ENCODE measurements at regions of chr13 and their contacts with region 1.

Region 1: DNA sequence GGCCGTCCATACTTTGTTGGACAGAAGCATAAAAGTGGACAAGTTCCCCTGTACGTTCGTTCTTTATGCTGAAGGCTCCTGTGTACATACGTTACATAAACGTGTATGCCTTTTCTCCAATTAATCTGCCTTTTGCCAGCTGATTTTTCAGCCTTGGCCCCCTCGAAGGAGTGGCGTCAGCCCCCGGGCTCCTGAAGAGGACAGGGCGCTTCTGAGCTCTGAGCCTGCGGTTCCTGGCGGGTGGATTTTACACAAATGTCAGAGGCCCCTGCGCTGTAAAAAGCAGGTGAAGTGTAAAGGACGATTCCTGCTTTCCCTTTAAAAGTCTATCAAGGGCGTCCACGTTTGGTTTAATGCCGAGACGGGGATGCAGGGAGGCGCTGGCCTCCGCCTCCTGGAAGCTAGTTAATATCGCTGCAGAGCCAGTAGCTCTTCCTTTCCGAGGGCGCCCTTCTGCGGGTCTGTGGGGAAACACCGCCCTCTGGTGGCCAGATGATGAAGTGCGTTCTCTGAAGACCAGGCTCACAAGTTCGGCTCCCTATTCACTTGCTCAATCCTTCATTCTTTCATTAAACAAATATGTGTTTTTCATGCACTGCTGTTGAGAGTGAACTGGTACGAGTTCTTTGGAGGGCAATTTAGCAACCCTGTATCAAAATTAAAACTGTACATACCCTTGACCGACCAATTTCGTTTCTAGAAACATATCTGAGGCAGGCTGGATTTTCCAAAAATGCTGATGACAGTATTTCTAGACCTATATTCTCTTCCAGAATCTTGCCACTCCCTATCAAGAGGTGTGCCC is 62.0 kb downstream of the GPR12 start:
- DNase-seq: peak; percentile 88
- ATAC-seq: peak; percentile 78
- H3K4me3 Mint-ChIP-seq: no peak overlapping the region
- H3K27ac Mint-ChIP-seq: no peak overlapping the region
- H3K4me1 Mint-ChIP-seq: no peaks in the 10 kb centered on the region
- H3K27me3 Mint-ChIP-seq: no peaks in the 10 kb centered on the region

Region 2: DNA sequence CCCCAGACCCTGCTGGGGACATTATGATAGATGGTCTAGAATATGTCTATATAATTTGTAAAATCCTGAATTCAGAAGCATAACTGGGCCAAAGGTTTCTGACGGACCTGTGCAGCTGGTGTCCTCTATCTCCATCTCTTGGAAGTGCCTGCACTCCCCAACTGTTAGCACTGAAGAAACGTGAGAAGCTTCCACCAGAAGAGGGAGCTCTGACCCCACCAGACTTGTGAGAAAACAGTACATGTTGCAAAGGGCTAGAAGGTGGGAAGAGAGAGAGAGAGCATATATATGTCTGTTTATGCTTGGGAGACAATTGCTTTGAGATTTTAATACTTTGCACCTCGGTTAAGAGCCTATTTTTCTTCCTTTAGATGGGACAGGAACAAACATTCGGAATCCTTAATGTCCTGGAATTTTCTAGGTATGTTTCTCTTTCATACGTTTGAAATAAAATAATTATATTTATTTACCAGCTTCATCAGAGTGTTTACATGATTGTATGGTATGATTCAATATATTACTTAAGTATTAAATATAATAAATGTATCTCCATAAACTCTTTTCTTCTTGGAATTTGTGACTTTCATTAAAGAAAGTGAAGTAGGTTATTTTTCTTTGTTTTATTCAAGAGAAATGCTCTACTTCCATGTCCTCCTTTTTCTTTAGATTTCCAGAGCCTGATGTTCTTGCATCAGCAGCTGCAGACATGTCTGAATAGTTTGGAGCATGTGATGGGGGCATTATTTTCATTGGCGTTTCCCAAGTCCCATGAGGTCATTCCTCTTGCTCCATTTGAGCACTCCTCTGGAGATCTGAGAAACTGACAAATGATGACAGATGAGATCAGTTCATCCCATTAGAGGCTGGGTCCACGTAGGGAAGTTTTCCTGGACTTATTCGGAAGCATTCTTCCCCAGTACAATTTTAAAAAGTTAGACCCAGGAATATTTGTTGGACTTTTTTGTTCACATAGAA is 1123.9 kb before region 1 on chr13:
- CTCF ChIA-PET with region 1: interaction called, 8 read pairs
- POLR2A ChIA-PET with region 1: no interaction called
- intact Hi-C with region 1: loop called in 1 of 2 experiments (anchors 1 kb)
- DNase-seq: peak; percentile 83
- ATAC-seq: peak; percentile 75
- H3K4me3 Mint-ChIP-seq: no peak overlapping the region
- H3K27ac Mint-ChIP-seq: no peak overlapping the region
- H3K4me1 Mint-ChIP-seq: no peaks in the 10 kb centered on the region
- H3K27me3 Mint-ChIP-seq: peaks cover 30% of the 10 kb centered on the region

Region 3: DNA sequence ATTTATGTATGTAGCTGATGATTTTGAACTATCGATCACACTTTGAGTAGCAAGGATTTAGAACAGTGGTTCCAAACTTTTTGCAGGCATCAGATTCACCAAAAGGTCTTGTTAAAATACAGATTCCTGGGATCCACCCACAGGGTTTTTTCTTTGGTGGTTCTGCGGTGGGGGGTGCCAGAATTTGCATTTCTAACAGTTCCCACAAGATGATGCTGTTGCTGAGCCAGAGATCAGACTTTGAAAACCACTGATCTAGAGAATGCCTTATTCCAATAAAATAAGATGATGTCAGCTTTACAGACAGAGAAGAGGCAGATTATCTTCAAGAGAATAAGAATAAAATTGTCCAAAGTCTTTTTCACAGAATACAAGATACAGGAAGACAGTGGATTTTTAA is 565.8 kb before region 1 on chr13:
- CTCF ChIA-PET with region 1: interaction called, 5 read pairs
- POLR2A ChIA-PET with region 1: no interaction called
- intact Hi-C with region 1: loop called in 1 of 2 experiments (anchors 2 kb)
- DNase-seq: peak; percentile 6
- ATAC-seq: no peak
- H3K4me3 Mint-ChIP-seq: no peak overlapping the region
- H3K27ac Mint-ChIP-seq: no peak overlapping the region
- H3K4me1 Mint-ChIP-seq: no peaks in the 10 kb centered on the region
- H3K27me3 Mint-ChIP-seq: peaks cover 7% of the 10 kb centered on the region

Region 4: GRCh38 chr13:26482451-26483197 is 216.0 kb before region 1 on chr13:
- CTCF ChIA-PET with region 1: interaction called, 22 read pairs
- POLR2A ChIA-PET with region 1: no interaction called
- intact Hi-C with region 1: loop called (anchors 1 kb)
- DNase-seq: peak; percentile 78
- ATAC-seq: peak; percentile 83
- H3K4me3 Mint-ChIP-seq: no peak overlapping the region
- H3K27ac Mint-ChIP-seq: no peak overlapping the region
- H3K4me1 Mint-ChIP-seq: peaks cover 14% of the 10 kb centered on the region
- H3K27me3 Mint-ChIP-seq: no peaks in the 10 kb centered on the region

Region 5: DNA sequence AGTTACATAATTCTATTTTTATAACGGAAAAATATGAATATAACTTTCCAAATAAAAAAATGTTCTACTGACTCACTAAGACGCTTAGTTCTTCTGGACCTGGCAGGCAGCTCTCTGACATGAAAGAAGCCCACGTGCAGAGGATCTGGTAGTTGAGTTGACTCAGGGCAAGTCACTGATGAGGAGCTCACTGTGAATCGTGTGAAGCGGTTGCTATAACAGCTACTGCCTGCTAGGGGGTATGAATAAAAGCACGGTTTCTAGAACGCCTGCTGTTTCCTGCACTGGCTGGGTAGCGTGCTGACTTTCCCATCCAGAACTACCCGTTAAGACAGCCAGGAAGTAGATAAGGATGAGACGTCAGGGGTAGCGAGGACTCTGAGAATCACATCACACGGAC is 195.8 kb before region 1 on chr13:
- CTCF ChIA-PET with region 1: interaction called, 13 read pairs
- POLR2A ChIA-PET with region 1: no interaction called
- intact Hi-C with region 1: loop called (anchors 5 kb)
- DNase-seq: peak; percentile 74
- ATAC-seq: peak; percentile 99
- H3K4me3 Mint-ChIP-seq: no peak overlapping the region
- H3K27ac Mint-ChIP-seq: no peak overlapping the region
- H3K4me1 Mint-ChIP-seq: peaks cover 22% of the 10 kb centered on the region
- H3K27me3 Mint-ChIP-seq: no peaks in the 10 kb centered on the region

Region 6: DNA sequence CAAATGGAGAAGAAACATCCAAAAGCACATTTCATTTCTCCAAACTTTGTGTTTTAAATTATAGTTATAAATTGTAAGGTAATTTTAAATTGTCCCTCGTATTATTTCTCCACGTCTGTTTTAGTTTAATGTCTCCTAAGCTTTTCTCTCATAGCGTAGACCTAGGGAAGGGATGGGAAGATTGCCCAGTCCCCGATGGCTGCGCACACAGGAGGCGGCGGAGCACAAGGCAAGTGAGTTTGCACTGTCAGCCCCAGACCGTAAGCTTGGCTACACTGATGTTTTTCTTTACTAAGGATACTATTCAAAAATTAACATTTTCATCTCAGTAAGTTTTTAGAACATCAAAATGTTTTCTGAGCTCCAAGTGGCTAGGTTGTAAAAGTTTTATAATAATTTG is 10.3 kb before region 1 on chr13:
- CTCF ChIA-PET with region 1: interaction called, 10 read pairs
- POLR2A ChIA-PET with region 1: no interaction called
- intact Hi-C with region 1: no loop called
- DNase-seq: no peak
- ATAC-seq: no peak
- H3K4me3 Mint-ChIP-seq: no peak overlapping the region
- H3K27ac Mint-ChIP-seq: no peak overlapping the region
- H3K4me1 Mint-ChIP-seq: no peaks in the 10 kb centered on the region
- H3K27me3 Mint-ChIP-seq: peaks cover 5% of the 10 kb centered on the region

Region 7: GRCh38 chr13:26872525-26873385 is 174.2 kb after region 1 on chr13:
- CTCF ChIA-PET with region 1: interaction called, 10 read pairs
- POLR2A ChIA-PET with region 1: no interaction called
- intact Hi-C with region 1: no loop called
- DNase-seq: peak; percentile 82
- ATAC-seq: no peak
- H3K4me3 Mint-ChIP-seq: no peak overlapping the region
- H3K27ac Mint-ChIP-seq: no peak overlapping the region
- H3K4me1 Mint-ChIP-seq: peaks cover 2% of the 10 kb centered on the region
- H3K27me3 Mint-ChIP-seq: peaks cover 9% of the 10 kb centered on the region

Region 8: DNA sequence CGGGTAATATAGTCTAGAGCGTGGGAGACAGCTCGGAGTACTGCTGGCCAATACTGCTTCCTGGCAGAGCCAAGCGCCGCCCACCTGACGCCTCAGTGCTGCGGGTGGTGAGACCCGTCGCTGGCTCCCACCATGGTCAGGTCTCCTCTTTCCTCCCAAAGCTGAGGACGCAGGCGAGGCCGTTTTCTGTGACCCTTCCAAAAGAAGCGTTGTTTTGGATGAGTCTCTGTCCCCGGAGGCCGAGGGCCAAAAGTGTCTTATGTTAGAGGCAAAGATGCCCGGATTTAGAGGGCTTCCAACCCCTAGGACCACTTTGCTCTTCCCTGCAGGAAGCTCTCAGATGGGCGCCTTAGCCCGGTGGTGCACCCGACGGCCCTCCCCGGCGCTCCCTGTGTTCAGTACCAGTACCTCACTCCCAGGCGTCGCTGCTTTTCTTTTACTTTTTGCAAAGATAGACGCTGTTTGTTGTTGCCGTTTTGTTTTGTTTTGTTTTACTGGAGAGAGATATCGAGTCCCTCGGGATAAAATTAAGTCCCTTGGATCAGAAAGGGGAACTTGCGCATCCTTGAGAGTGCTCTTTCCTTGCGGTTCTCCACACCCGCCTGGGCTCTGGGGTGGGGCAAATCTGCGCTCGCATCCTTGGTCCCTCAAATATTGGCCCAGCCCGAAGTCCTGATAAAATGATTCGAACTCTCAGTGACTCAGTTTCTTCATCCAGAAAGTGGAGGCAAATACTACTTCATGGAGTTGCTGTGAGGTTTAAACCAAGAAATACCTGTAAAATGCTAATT is 1228.2 kb after region 1 on chr13:
- CTCF ChIA-PET with region 1: no interaction called
- POLR2A ChIA-PET with region 1: no interaction called
- intact Hi-C with region 1: no loop called
- DNase-seq: peak; percentile 33
- ATAC-seq: no peak
- H3K4me3 Mint-ChIP-seq: peak overlapping the region; percentile 7
- H3K27ac Mint-ChIP-seq: no peak overlapping the region
- H3K4me1 Mint-ChIP-seq: peaks cover 22% of the 10 kb centered on the region
- H3K27me3 Mint-ChIP-seq: peaks cover 84% of the 10 kb centered on the region

Measured in activated CD4-positive, alpha-beta T cell treated with anti-CD3 and anti-CD28 coated beads for 36 hours (primary cell).